AG04449 (cell line): ENCODE measurements at regions of chr5 and their contacts with region 1.

Region 1: GRCh38 chr5:132064738-132065331 is 4.4 kb downstream of the IL3 start:
- DNase-seq: no peak
- H3K4me3 ChIP-seq: no peak overlapping the region
- CTCF ChIP-seq: peak; percentile 94

Region 2: DNA sequence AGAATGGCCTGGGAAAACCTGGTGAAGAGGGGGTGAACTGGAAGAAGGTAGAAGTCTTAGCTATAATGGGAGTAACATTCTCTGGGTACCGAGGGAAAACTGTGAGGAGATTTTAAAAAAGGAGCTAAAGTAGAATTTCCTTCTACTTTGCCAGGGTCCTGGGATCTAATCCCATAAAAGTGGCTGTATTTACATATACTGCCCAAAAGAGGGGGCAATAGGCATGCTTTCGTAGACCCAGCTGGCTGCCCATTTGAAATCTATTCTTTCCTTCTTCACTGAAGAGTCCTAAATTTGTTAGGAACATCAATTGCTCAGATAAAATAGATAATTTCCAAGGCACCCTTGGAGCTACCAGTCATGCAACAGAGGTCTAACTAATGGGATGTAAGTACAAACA is 641.8 kb before region 1 on chr5:
- CTCF ChIA-PET with region 1: interaction called, 25 read pairs
- POLR2A ChIA-PET with region 1: no interaction called
- DNase-seq: no peak
- H3K4me3 ChIP-seq: no peak overlapping the region
- CTCF ChIP-seq: peak; percentile 49

Region 3: DNA sequence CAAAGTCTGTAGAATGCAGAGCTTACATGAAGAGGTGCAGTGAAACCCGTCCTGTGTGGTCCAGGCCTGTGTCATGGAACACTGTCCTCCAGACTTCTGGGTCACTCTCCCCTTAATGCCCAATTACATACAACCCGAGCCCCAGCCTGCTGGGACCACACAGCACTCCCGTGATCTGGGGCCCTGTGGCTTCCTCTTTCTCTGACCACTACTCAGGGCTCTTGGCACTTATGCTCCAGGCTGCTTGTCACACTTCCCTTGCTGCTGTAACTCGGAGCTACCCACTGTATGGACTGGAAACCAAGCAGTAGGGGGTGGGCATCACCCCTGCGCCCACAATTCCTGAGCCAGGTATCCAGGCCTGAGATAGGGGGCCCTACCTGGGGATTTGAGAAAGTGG is 14.7 kb before region 1 on chr5:
- CTCF ChIA-PET with region 1: interaction called, 61 read pairs
- POLR2A ChIA-PET with region 1: no interaction called
- DNase-seq: no peak
- H3K4me3 ChIP-seq: no peak overlapping the region
- CTCF ChIP-seq: no peak

Region 4: DNA sequence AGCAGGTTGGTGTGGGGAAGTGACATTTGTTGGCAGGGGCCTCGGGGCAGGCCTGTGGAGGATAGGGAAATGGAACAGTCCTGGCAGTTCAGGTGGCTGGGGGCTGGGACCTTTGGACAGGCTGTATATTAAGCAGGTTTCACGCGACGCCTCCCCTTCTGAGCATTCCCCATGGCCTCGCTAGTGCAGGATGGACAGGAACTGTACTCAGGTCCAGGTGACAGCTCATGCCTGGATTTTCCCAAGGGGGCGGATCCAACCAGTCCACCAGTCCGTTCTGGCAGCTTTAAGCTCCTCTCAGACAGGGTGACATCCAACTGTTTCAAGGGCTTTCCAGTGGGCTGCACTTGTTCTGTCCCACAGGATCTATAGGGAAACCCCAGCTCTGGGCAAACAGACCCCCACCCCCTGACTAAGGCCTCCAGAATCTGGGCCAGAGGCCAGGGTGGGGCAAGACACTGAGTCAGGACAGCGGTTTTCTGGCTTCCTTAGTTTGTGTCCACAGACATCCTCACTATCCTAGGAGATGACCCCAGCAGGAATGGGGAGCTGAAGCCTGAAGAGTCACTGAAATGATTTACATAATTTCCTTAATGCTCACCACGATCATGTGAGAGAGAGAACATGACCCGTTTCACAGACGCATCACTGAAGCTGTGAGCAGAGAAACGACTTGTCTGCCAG is 29.7 kb after region 1 on chr5:
- CTCF ChIA-PET with region 1: interaction called, 79 read pairs
- POLR2A ChIA-PET with region 1: no interaction called
- DNase-seq: peak; percentile 93
- H3K4me3 ChIP-seq: no peak overlapping the region
- CTCF ChIP-seq: no peak

Region 5: GRCh38 chr5:132142459-132142858 is 77.6 kb after region 1 on chr5:
- CTCF ChIA-PET with region 1: interaction called, 111 read pairs
- POLR2A ChIA-PET with region 1: no interaction called
- DNase-seq: no peak
- H3K4me3 ChIP-seq: no peak overlapping the region
- CTCF ChIP-seq: no peak

Region 6: DNA sequence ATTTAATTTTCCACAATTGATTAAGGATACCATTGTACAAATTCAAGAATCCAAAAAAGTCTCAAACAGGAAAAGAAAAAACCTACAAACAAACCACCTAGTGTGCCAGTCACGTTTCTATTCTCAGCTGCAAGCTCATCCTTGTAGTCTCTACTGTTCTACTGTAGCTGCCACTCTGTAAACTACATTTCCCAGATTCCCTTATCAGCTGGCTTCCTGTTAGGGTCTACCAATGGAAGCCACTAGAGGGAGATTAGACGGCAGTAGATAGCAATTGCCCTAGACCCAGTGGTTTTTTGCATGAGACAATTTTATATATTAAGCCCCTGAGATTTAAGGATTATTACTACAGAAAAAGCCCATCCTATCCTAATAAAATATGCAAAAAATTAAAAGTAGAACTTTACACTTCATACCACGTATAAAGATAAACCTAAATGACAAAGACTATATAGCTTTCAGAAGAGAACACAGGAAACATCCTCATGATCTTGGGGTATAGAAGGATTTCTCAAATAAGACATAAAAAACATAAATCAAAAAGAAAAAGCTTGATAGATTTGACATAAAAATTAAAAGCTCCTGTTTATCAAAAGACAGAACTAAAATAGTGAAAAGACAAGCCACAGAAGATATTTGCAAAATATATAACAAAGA is 125.5 kb after region 1 on chr5:
- CTCF ChIA-PET with region 1: interaction called, 20 read pairs
- POLR2A ChIA-PET with region 1: no interaction called
- DNase-seq: peak; percentile 17
- H3K4me3 ChIP-seq: no peak overlapping the region
- CTCF ChIP-seq: peak; percentile 81